ENCODE measurements at regions of chr11 and their contacts with region 1.

Region 1: DNA sequence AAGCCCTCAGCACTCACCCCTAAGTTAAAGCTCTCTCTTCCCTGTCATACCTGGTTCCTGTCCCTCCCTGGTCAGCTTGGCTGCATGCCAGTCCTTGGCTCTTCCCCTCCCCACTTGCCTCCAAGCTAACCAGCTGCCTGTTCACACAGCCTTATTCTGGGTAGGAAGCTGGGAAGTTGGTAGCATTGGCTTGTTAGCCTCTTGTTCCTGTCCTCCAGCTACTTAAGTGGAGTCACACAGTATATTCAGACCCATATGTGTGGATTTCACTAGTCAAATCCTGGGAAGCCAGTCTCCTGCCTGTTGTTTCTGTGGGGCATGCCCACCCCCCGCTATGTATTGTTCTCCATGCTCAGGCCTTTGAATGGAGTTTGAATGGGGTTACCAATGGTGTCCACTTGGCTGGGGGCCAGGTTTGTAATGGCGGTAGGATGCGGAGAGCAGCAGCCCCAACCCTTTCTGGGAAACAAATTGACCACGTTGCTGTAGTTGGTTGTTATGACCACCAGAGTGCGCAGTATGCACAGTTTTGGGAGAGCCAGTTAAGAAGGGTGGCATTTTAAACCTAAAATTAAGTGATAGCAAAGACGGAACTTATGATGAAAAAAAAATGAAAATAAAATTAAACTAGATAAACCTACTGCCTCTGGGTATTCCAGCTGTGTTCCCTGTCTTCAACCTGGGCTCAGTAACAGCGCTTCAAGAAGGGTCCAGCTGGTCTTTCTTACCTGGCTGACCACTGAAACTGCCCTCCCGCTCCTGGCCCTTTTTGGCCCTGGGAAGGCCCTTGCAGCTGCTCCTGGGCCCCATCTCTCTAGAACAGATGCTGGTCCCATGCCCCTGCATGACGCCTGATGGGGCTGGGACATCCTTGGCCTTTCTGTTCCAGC is 10.7 kb upstream of the RPS3 start:
- DNase-seq: peak; percentile 73
- H3K27ac ChIP-seq: no peak overlapping the region
- CTCF ChIP-seq: peak; percentile 83

Region 2: GRCh38 chr11:75280227-75280701 is 108.4 kb before region 1 on chr11:
- CTCF ChIA-PET with region 1: interaction called, 36 read pairs
- POLR2A ChIA-PET with region 1: no interaction called
- DNase-seq: peak; percentile 77
- H3K27ac ChIP-seq: no peak overlapping the region
- CTCF ChIP-seq: peak; percentile 92